Prostate gland (tissue), 2 donors: ENCODE measurements at regions of chrX and their contacts with region 1.

Region 1: DNA sequence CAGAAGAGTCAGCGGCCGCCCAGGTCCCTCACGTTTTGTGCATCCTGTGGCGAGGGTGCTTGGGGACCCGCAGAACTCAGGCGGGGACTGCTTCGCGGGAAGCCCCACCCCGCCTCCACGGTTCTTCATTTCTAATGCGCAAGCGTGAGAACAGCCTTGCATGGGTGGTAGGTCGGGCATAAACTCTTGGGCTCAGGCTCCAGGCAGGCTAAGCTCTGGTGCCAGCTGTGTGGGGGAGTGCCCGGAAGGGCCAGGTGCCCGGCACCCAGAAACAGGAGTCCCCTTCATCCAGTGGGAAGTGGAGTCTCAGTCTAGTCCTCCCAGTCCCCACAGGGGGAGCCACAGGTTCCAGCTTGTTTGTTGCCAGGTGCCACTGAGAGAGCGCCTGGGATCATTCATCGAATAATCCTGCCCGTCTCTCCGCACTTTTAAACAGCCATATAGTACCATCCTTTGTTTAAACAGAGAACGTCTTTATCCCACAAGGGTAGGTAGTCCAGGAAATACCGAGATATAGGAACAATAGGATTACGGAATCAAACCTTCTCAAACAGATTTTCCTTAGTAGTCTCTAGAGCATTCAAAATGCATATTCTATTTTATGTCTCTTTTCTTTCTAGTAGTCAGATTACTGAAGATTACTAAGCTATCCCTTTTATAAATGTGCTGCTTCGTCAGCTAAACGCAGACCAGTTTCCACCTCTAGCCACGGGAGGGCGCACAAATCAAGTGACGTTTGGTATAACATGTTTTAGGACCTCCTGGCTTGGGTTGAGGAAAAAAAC is 12.7 kb upstream of the RBBP7 start:
- DNase-seq: peak; percentile 36
- H3K4me3 ChIP-seq: peak overlapping the region; percentile 25 to 36
- H3K27ac ChIP-seq: peak overlapping the region; percentile 69 to 75
- H3K4me1 ChIP-seq: no peaks in the 10 kb centered on the region
- H3K27me3 ChIP-seq: no peaks in the 10 kb centered on the region
- CTCF ChIP-seq: peak; percentile 12 to 63 (median 50)
- POLR2A ChIP-seq: no peak

Region 2: DNA sequence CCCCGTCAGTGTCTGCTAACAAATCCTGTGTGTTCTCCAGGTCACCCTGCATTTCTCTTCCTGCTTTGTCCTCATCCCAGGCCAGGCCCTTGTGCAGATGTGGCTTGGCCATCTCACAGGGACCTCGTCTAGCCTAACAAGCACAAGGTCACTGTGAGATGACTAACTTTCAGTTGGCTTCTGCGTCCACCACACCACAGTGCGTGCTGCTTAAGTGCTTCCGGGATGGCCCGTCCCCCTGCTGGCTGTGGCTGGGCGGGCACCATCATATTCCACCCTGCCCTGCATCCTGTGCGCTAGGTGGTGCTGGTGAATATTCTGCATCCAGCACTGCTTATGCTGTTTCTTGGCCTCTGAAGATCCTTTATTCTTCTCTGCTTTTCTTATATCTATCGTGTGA is 46.5 kb before region 1 on chrX:
- intact Hi-C with region 1: loop called (anchors 5 kb)
- DNase-seq: no peak
- H3K4me3 ChIP-seq: no peak overlapping the region
- H3K27ac ChIP-seq: no peak overlapping the region
- H3K4me1 ChIP-seq: no peaks in the 10 kb centered on the region
- H3K27me3 ChIP-seq: no peaks in the 10 kb centered on the region
- CTCF ChIP-seq: peak in 3 of 4 experiments; percentile 25 to 48 (median 36)
- POLR2A ChIP-seq: no peak

Region 3: DNA sequence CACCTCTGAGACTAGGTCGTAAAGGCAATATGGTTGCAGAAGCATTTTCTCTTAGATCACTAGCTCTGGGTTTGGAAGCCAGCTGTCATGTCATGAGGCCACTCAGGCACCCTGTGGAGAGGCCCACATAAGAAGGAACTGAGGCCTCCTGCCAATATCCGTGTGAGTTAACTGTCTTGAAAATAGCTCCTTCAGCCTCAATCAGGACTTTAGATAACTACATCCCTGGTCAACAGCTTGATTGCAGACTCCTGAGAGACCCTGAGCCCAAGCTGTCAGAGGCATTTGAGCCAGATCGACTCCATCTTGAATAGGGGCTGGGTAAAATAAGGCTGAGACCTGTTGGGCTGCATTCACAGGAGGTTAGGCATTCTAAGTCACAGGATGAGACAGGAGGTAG is 48.5 kb after region 1 on chrX:
- intact Hi-C with region 1: no loop called
- DNase-seq: no peak
- H3K4me3 ChIP-seq: no peak overlapping the region
- H3K27ac ChIP-seq: no peak overlapping the region
- H3K4me1 ChIP-seq: no peaks in the 10 kb centered on the region
- H3K27me3 ChIP-seq: no peaks in the 10 kb centered on the region
- CTCF ChIP-seq: no peak
- POLR2A ChIP-seq: no peak

Region 4: DNA sequence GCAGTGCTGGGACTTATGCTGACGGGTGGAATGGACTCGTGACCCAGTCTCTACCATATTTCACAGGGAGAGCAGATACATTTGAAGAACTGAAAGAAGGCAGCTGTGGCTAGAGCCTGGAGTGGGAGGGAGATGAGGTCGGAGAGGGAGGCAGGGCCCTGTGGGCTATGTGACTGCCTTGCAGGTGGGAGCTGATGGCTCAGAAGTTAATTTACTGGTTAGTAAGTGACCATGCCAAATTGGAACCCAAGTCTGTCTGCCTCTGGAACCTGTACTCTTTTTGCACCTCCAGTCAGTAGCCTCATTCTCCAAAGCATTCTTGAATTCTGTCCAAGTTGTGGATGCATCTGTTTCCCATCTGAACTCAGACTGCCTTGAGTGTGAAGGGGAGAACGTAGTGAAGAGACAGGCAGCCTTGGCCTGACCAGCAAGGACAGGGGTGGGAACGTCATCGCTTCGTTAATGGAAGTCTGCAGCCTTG is 155.8 kb after region 1 on chrX:
- intact Hi-C with region 1: loop called (anchors 5 kb)
- DNase-seq: no peak
- H3K4me3 ChIP-seq: no peak overlapping the region
- H3K27ac ChIP-seq: no peak overlapping the region
- H3K4me1 ChIP-seq: no peaks in the 10 kb centered on the region
- H3K27me3 ChIP-seq: no peaks in the 10 kb centered on the region
- CTCF ChIP-seq: no peak
- POLR2A ChIP-seq: no peak

Region 5: DNA sequence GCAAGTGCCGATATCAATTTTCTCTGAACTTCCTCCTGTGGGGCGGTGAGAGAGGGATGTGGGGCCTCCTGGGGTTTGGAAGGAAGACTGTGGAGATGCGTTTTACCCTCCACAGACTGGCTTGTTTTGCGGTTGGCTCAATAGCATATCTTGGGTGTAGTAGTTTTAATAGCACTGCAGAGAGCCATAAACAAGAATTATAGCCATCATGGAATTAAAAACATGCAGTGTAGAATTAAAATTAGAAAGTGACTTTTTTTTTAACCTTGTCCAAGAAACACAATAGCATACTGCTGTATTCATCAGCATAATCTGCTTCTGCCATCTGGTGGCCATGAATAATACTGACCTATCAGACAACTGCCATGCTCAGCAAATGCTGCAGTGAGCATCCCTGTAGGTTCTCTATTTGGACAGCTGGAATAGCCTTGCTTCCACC is 807.1 kb after region 1 on chrX:
- intact Hi-C with region 1: loop called (anchors 5 kb)
- DNase-seq: peak; percentile 56
- H3K4me3 ChIP-seq: no peak overlapping the region
- H3K27ac ChIP-seq: no peak overlapping the region
- H3K4me1 ChIP-seq: no peaks in the 10 kb centered on the region
- H3K27me3 ChIP-seq: no peaks in the 10 kb centered on the region
- CTCF ChIP-seq: peak in 3 of 4 experiments; percentile 48 to 78 (median 65)
- POLR2A ChIP-seq: no peak